MCF 10A (cell line): ENCODE measurements at regions of chr5 and their contacts with region 1.

Region 1: GRCh38 chr5:13566871-13567339 is 377.6 kb downstream of the DNAH5 start:
- DNase-seq: peak; percentile 88
- H3K4me3 Mint-ChIP-seq: no peak overlapping the region
- H3K27ac Mint-ChIP-seq: peak overlapping the region; percentile 54
- H3K4me1 Mint-ChIP-seq: peaks cover 9% of the 10 kb centered on the region
- H3K27me3 Mint-ChIP-seq: no peaks in the 10 kb centered on the region
- CTCF ChIP-seq: no peak

Region 2: DNA sequence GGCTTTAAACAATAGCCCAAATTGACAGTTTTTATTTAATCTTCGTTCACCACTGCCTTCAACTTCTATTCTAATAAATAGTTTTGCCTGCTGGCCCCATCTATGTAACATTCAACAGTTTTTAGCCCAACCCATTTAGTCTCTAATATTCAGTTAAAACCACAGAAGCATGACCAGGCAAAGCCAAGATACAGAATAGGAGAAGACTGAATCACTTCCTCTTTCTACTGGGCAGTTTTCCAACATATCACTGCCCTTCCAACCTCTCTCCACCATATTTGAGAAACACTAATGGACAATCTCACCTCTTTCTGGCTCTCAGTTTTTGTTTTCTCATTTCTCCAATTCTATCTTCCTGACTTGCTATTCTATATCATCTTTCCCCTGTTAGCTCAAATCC is 24.7 kb after region 1 on chr5:
- CTCF ChIA-PET with region 1: interaction called, 3 read pairs
- POLR2A ChIA-PET with region 1: interaction called, 4 read pairs
- intact Hi-C with region 1: loop called (anchors 1 kb)
- DNase-seq: peak; percentile 86
- H3K4me3 Mint-ChIP-seq: no peak overlapping the region
- H3K27ac Mint-ChIP-seq: peak overlapping the region; percentile 52
- H3K4me1 Mint-ChIP-seq: peaks cover 19% of the 10 kb centered on the region
- H3K27me3 Mint-ChIP-seq: no peaks in the 10 kb centered on the region
- CTCF ChIP-seq: no peak

Region 3: GRCh38 chr5:13660072-13660471 is 93.2 kb after region 1 on chr5:
- CTCF ChIA-PET with region 1: interaction called, 4 read pairs
- POLR2A ChIA-PET with region 1: no interaction called
- intact Hi-C with region 1: loop called (anchors 5 kb)
- DNase-seq: peak; percentile 27
- H3K4me3 Mint-ChIP-seq: no peak overlapping the region
- H3K27ac Mint-ChIP-seq: no peak overlapping the region
- H3K4me1 Mint-ChIP-seq: peaks cover 37% of the 10 kb centered on the region
- H3K27me3 Mint-ChIP-seq: no peaks in the 10 kb centered on the region
- CTCF ChIP-seq: no peak

Region 4: GRCh38 chr5:15151653-15152052 is 1584.7 kb after region 1 on chr5:
- CTCF ChIA-PET with region 1: no interaction called
- POLR2A ChIA-PET with region 1: no interaction called
- intact Hi-C with region 1: no loop called
- DNase-seq: no peak
- H3K4me3 Mint-ChIP-seq: no peak overlapping the region
- H3K27ac Mint-ChIP-seq: no peak overlapping the region
- H3K4me1 Mint-ChIP-seq: no peaks in the 10 kb centered on the region
- H3K27me3 Mint-ChIP-seq: peaks cover 44% of the 10 kb centered on the region
- CTCF ChIP-seq: no peak